KBM-7 (cell line): ENCODE measurements at regions of chr9 and their contacts with region 1.

Region 1: DNA sequence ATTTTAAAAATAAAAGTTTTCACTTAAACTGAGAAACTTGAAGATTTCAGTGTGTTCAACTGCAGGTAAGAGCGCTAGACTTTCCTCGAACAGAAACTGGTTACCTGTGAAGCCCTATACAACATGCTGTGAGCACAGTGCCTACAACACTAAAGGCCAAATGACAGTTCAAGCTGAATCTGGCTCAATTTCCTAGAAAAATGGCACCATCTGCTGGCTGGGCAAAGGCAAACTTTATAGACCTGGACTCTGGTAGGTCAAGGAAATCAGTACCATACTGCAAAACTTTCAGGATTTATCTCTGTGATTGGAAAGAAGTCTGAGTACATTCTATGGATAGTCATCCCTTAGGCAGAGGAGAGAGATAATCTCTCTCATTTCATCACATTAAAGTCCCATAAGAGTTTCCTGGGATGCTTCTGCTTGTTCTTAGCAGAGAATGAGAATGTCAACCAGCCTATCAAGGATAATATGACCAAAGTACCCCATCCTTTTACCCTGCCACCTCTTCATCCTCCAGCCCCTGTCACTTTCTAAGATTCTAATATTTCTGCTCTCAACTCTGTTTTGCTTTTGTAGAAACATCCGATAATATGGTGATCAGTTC is 31.8 kb upstream of the FOXB2 start:
- DNase-seq: peak; percentile 29

Region 2: DNA sequence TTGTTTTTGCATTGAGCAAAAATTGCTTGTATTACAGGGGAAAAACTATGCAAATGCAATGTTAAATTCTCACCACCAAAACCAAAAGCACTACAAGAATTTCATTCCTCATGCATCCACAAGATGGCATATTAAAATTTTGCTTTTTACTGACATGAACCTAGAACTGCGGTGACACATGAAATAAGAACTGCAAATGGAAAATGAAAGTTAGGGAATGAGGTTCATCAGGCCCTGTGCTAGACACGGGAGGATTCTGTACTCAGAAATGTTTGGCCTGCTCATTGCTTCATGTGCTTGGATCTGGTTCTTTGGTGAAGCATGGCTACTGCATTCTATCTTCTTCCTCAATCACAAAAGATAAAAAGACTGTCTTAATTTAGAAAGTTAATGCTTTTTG is 584.3 kb before region 1 on chr9:
- in situ Hi-C with region 1: loop called (anchors 25 kb)
- DNase-seq: peak; percentile 74

Region 3: DNA sequence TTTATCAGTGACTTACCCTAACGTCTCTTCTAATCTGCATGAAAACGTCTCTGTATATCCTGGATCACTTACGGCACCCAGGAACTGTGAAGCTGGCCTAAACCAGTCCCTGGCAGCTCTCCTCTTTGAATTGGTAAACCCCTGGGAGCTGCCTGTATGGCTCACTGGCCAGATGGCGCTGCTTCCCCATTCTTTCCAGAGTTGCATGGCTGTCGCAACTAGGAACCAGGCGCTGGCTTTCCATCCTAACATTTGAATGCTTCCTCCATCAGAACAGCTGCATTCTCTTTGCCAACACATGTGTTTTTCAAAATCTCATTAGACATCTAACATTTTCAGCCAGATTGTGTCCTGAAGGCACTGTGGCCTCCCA is 231.4 kb before region 1 on chr9:
- in situ Hi-C with region 1: loop called (anchors 25 kb)
- DNase-seq: peak; percentile 32

Region 4: GRCh38 chr9:77944556-77945243 is 957.0 kb after region 1 on chr9:
- in situ Hi-C with region 1: no loop called
- DNase-seq: peak; percentile 85